Uterus (tissue), 4 donors: ENCODE measurements at regions of chr19 and their contacts with region 1.

Region 1: DNA sequence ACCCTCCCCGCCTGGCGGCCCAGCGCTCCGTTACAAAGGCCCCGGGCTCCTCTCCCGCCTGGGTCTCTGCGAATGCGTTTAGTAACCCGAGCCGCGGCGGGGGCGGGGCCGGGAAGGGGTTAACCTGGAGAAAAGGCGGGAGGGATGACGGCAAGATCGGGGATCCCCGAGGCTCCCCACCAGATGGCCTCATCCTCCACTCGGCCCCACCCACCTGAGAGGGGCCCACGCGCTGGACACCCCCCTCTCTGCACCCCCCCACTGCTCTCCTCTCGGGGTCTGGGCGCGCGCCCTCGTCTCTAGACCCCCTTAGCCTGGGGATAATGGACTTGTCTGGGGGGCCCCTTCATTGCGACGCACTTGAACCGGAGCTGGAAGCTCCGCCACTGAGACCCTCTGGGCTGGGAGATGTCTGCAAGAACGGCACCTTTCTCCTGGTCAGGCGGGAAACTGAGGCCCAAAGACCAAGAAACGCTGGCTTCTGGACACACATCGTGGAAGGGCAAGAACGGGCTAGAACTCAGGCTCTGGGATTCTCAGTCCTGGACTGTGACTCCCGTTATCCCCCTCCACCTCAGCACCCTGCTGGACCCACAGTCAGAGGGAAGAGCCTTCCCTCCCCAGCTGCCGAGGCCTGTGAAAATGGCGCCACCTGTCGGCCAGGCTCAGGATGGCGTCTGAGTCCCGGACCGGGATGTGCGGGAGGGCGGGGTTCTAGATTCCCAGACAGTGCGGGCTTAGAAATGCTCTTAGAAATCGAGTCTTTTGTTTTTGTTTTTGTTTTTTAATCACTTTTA is 2.9 kb upstream of the LTBP4 start:
- DNase-seq: peak; percentile 91 to 93
- H3K4me3 ChIP-seq: peak overlapping the region in 1 of 2 donors; percentile 40
- H3K27ac ChIP-seq: peak overlapping the region; percentile 91 to 97
- H3K4me1 ChIP-seq: peaks cover 0 to 34% of the 10 kb centered on the region in 2 donors
- H3K27me3 ChIP-seq: no peaks in the 10 kb centered on the region
- CTCF ChIP-seq: peak; percentile 96 to 99 (median 98)
- POLR2A ChIP-seq: peak in 1 of 2 donors; percentile 32

Region 2: DNA sequence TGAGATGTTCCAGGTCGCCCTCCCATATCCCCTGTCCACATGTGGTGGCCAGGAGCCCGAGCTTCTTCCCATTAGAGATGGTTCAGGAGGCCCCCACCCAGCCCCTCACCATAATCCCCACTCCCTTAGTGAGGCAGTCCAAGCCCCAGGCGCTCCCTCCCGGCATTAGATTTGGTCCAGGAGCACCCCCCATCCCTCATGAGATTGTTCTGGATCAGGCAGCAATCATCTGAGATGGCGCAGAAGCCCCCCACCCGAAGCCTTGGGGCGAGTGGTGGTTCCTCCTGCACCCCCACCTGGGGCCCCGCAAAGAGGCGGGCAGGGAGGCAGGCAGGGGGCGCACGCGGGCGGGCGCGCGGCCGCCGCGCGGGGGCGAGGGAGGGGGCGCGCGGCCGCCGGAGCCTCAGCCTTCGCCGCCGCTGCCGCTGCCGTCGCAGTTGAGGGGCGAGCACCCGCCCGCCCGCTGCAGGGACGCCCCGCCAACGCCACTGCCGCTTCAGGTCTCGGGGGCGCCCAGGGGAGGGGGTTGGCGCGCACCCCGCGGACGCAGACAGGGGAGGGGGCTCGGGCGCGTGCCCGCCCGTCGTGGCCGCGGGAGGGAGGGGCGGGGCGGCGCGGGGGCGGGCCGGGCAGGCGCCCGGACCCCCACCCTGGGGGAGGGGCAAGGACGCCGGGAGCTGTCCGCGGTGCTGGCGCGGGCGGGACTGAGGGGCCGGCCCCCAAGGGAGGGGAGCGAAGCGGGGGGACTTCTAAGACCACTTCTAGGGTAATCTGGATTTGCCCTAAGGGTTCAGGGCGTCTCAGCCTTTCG is 68.0 kb before region 1 on chr19:
- intact Hi-C with region 1: loop called (anchors 5 kb)
- DNase-seq: no peak
- H3K4me3 ChIP-seq: no peak overlapping the region
- H3K27ac ChIP-seq: no peak overlapping the region
- H3K4me1 ChIP-seq: peaks cover 0 to 10% of the 10 kb centered on the region in 2 donors
- H3K27me3 ChIP-seq: no peaks in the 10 kb centered on the region
- CTCF ChIP-seq: peak in 2 of 4 experiments; percentile 21 to 30
- POLR2A ChIP-seq: no peak

Region 3: GRCh38 chr19:40662921-40663694 is 64.8 kb after region 1 on chr19:
- intact Hi-C with region 1: no loop called
- DNase-seq: peak; percentile 93 to 96
- H3K4me3 ChIP-seq: peak overlapping the region; percentile 39 to 47
- H3K27ac ChIP-seq: peak overlapping the region; percentile 90 to 91
- H3K4me1 ChIP-seq: no peaks in the 10 kb centered on the region
- H3K27me3 ChIP-seq: no peaks in the 10 kb centered on the region
- CTCF ChIP-seq: peak in 3 of 4 experiments; percentile 99
- POLR2A ChIP-seq: peak; percentile 23 to 53